Breast epithelium (tissue), 4 donors: ENCODE measurements at regions of chr7 and their contacts with region 1.

Region 1: GRCh38 chr7:106050011-106050745 is 61.9 kb downstream of the SYPL1 start:
- DNase-seq: no peak
- H3K4me3 ChIP-seq: no peak overlapping the region
- H3K27ac ChIP-seq: peak overlapping the region in 1 of 2 donors; percentile 23
- H3K4me1 ChIP-seq: peaks cover 0 to 8% of the 10 kb centered on the region in 2 donors
- H3K27me3 ChIP-seq: no peaks in the 10 kb centered on the region
- CTCF ChIP-seq: no peak
- POLR2A ChIP-seq: no peak

Region 2: DNA sequence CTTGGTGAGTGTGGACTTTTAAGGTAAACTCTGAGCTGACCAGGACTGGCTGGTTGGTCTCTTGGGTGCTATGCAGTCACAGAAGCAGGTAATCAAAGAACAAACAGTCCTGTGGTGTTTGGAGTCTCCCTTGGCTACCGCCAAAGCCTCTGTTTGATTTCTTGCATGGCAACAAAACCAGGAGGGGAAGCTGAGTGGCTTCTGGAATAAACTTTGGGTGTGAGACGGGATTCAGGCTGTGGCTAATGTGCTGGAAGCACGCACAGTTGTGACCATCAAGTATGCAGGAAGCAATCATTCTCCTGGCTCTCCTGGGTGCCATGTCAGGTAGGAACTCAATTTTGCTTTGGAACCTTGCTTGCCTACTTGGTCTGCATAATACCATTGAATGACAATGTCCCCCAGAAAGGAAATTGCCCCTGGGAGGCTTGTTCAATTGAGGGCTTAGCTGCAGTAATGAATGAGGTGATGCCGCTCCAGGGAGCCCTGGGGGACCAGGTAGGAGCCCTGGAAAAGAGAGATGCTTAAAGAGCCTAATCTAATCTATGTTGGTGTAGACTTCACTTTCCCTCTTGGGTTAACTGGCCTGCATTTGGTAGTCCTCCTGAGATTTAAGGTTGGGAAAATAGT is 87.0 kb before region 1 on chr7 and contains the start of gene CDHR3:
- intact Hi-C with region 1: no loop called
- DNase-seq: no peak
- H3K4me3 ChIP-seq: no peak within 1 kb of the TSS
- H3K27ac ChIP-seq: no peak within 1 kb of the TSS
- H3K4me1 ChIP-seq: no peaks in the 10 kb centered on the region
- H3K27me3 ChIP-seq: no peaks in the 10 kb centered on the region
- CTCF ChIP-seq: no peak
- POLR2A ChIP-seq: no peak
- total RNA-seq, gene CDHR3: 4.6 to 8.8 (median 6.4) TPM

Region 3: DNA sequence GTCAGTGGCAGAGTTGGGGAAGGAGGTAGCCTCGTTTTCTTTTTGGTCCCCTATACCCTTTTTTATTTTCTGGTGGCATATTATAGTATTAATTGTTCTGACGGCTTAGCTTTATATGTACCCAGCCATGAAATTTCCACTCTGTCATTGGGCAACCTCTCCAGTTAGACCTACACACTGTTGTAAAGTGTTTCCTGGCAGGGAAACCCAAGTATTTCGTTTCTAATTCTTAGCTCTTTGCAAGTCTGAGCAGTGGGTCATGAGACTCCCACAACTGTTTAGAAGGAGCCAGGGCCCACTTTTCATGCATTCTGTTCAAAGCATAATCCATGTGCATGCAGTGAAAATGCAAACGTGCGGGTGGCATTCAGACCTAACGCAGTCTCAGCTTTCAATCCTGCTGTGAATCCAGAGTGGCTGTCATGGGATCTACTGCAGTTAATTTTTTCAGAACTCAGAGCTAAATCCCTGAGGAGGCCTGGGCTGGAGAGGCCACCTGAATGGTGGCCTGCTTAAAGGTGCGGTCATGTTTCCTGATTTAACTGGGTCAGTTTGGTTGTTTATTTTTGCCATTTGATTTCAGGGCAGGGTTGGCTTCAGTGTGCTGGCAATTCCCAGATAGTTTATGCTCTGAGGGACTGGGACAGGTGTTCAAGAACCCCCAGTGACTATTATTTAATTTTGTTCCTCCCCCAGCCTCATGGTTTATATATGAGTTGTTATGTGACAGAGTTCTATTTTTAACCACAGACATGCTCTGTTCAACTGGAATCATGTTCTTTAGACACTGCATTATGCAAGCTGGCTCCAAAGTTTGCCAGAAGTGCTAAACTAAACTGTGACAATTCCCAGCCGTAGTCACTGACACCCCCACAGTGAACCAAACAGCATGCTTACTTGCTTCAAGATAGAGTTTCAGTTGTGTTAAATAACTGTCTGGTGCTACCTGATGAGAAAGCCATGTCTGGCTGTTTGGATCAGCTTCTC is 89.4 kb after region 1 on chr7:
- intact Hi-C with region 1: loop called (anchors 5 kb)
- DNase-seq: no peak
- H3K4me3 ChIP-seq: no peak overlapping the region
- H3K27ac ChIP-seq: no peak overlapping the region
- H3K4me1 ChIP-seq: no peaks in the 10 kb centered on the region
- H3K27me3 ChIP-seq: no peaks in the 10 kb centered on the region
- CTCF ChIP-seq: no peak
- POLR2A ChIP-seq: no peak

Region 4: DNA sequence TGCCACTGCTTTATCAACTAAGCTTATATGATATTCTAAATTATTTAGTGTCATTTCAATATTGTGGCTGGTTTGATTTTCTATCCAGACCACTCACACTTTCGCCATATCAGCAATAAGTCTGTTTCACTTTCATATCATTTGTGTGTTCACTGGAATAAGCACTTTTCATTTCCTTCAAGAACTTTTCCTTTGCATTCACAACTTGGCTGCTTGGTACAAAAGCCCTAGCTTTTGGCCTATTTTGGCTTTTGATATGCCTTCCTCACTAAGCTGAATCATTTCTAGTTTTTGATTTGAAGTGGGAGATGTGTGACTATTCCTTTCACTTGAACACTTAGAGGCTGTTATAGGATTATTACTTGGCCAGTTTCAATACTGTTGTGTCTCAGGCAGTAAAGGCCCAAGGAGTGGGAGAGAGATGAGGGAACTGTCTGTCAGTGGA is 355.5 kb after region 1 on chr7:
- intact Hi-C with region 1: no loop called
- DNase-seq: no peak
- H3K4me3 ChIP-seq: no peak overlapping the region
- H3K27ac ChIP-seq: no peak overlapping the region
- H3K4me1 ChIP-seq: no peaks in the 10 kb centered on the region
- H3K27me3 ChIP-seq: no peaks in the 10 kb centered on the region
- CTCF ChIP-seq: no peak
- POLR2A ChIP-seq: no peak